CD4-positive, alpha-beta T cell (primary cell): ENCODE measurements at regions of chr19 and their contacts with region 1.

Region 1: GRCh38 chr19:19663256-19664038 is at the start of gene ATP13A1:
- DNase-seq: peak; percentile 88 to 99 (median 93)
- ATAC-seq: peak; percentile 67
- H3K4me3 ChIP-seq: peak within 1 kb of the TSS; percentile 94
- H3K4me3 Mint-ChIP-seq: peak within 1 kb of the TSS; percentile 95
- H3K27ac ChIP-seq: peak within 1 kb of the TSS; percentile 96
- H3K27ac Mint-ChIP-seq: peak within 1 kb of the TSS; percentile 99
- H3K4me1 ChIP-seq: peaks cover 70% of the 10 kb centered on the region
- H3K4me1 Mint-ChIP-seq: peaks cover 47% of the 10 kb centered on the region
- H3K27me3 ChIP-seq: no peaks in the 10 kb centered on the region
- H3K27me3 Mint-ChIP-seq: no peaks in the 10 kb centered on the region
- CTCF ChIP-seq: no peak
- total RNA-seq, gene ATP13A1: 84.8 to 87.6 TPM

Region 2: GRCh38 chr19:18281082-18282020 is 1382.1 kb before region 1 on chr19 and contains the start of gene JUND:
- CTCF ChIA-PET with region 1: no interaction called
- POLR2A ChIA-PET with region 1: interaction called, 12 read pairs
- intact Hi-C with region 1: no loop called
- DNase-seq: peak; percentile 92 to 100 (median 97)
- ATAC-seq: peak; percentile 63
- H3K4me3 ChIP-seq: peak within 1 kb of the TSS; percentile 99
- H3K4me3 Mint-ChIP-seq: peak within 1 kb of the TSS; percentile 99
- H3K27ac ChIP-seq: peak within 1 kb of the TSS; percentile 99
- H3K27ac Mint-ChIP-seq: peak within 1 kb of the TSS; percentile 100
- H3K4me1 ChIP-seq: peaks cover 65% of the 10 kb centered on the region
- H3K4me1 Mint-ChIP-seq: peaks cover 58% of the 10 kb centered on the region
- H3K27me3 ChIP-seq: no peaks in the 10 kb centered on the region
- H3K27me3 Mint-ChIP-seq: peaks cover 9% of the 10 kb centered on the region
- CTCF ChIP-seq: no peak
- total RNA-seq, gene JUND: 1,827 to 1,976 TPM

Region 3: DNA sequence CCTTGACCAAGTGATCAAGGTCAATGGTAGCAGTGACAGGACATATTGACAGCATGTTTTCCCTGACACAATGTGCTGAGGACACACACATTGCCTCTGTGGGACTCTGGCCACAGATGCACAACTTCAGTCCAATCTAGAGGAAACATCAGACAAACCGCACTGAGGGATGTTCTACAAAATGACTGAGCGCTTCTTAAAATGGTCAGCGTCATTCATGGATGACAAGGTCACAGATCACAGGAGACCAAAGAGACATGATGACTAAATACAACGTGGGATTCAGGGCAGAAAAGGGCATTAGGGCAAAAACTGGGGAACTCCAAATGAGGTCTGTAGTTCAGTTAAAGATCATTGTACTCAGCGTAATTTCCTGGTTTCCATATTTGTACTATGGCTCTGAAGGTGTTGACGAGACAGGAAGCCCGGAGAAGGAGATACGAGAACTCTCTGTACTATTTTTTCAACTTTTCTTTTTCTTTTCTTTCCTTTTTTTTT is 65.6 kb before region 1 on chr19:
- CTCF ChIA-PET with region 1: no interaction called
- POLR2A ChIA-PET with region 1: interaction called, 32 read pairs
- intact Hi-C with region 1: loop called in 1 of 2 experiments (anchors 2 kb)
- DNase-seq: peak in 10 of 14 experiments; percentile 20 to 96 (median 40)
- ATAC-seq: peak; percentile 73
- H3K4me3 ChIP-seq: no peak overlapping the region
- H3K4me3 Mint-ChIP-seq: peak overlapping the region; percentile 55
- H3K27ac ChIP-seq: peak overlapping the region; percentile 94 to 97
- H3K27ac Mint-ChIP-seq: peak overlapping the region; percentile 95
- H3K4me1 ChIP-seq: peaks cover 96% of the 10 kb centered on the region
- H3K4me1 Mint-ChIP-seq: peaks cover 62% of the 10 kb centered on the region
- H3K27me3 ChIP-seq: no peaks in the 10 kb centered on the region
- H3K27me3 Mint-ChIP-seq: no peaks in the 10 kb centered on the region
- CTCF ChIP-seq: no peak

Region 4: DNA sequence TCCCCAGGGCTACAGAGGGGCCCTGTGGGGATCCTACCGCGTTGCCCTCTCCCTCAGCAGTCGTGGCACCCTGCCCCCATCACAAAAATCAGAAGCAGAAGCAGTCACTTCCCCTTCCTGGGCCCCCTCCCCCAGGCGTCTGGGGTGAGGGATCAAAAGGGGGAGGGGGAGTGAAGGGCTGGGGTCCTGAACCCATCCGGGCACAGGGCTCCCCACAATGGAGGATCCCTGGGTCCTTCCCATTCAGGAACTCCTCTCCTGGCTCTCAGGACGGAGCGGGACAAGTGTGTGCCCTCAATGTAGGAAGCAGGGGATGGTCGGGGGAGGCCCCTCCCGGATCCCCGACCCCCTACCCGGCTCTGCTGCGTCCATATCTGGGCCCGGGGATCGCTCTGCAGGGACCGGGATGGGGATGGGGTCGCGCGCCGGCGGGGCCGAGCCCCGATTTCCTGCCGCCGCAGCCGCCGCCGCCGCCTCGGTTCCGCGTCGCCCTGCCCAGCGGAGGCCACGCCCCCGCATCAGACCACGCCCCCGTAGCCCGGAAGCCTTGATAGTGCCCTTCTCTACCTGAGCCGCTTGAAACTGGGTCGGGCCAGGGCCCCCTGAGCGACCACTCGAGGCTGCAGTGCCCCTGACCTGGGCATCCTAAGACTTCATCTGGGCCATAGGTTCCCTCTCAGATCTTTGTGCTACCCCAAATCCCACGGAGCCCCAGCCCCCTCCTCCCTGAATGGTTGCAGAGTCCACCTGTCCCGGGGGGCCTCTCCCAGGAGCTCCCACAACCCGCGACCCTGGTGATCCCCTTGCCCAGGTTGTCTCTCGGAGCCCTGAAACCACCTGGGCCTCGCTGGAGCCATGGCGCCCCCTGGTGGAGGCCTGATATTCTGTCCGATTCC is 20.0 kb before region 1 on chr19 and contains the start of gene GMIP:
- CTCF ChIA-PET with region 1: interaction called, 4 read pairs
- POLR2A ChIA-PET with region 1: interaction called, 19 read pairs
- intact Hi-C with region 1: loop called in 1 of 2 experiments (anchors 2 kb)
- DNase-seq: peak; percentile 82 to 94 (median 88)
- ATAC-seq: peak; percentile 90
- H3K4me3 ChIP-seq: peak within 1 kb of the TSS; percentile 100
- H3K4me3 Mint-ChIP-seq: peak within 1 kb of the TSS; percentile 99
- H3K27ac ChIP-seq: peak within 1 kb of the TSS; percentile 91 to 97
- H3K27ac Mint-ChIP-seq: peak within 1 kb of the TSS; percentile 95
- H3K4me1 ChIP-seq: peaks cover 33% of the 10 kb centered on the region
- H3K4me1 Mint-ChIP-seq: peaks cover 23% of the 10 kb centered on the region
- H3K27me3 ChIP-seq: no peaks in the 10 kb centered on the region
- H3K27me3 Mint-ChIP-seq: no peaks in the 10 kb centered on the region
- CTCF ChIP-seq: peak; percentile 74
- total RNA-seq, gene GMIP: 89.6 to 97.0 TPM

Region 5: GRCh38 chr19:19719798-19720197 is 56.4 kb after region 1 on chr19:
- CTCF ChIA-PET with region 1: no interaction called
- POLR2A ChIA-PET with region 1: interaction called, 11 read pairs
- intact Hi-C with region 1: no loop called
- DNase-seq: peak in 1 of 14 experiments; percentile 28
- ATAC-seq: peak; percentile 44
- H3K4me3 ChIP-seq: no peak overlapping the region
- H3K4me3 Mint-ChIP-seq: peak overlapping the region; percentile 28
- H3K27ac ChIP-seq: no peak overlapping the region
- H3K27ac Mint-ChIP-seq: no peak overlapping the region
- H3K4me1 ChIP-seq: no peaks in the 10 kb centered on the region
- H3K4me1 Mint-ChIP-seq: peaks cover 4% of the 10 kb centered on the region
- H3K27me3 ChIP-seq: no peaks in the 10 kb centered on the region
- H3K27me3 Mint-ChIP-seq: no peaks in the 10 kb centered on the region
- CTCF ChIP-seq: no peak

Region 6: GRCh38 chr19:19745496-19746285 is 82.2 kb after region 1 on chr19:
- CTCF ChIA-PET with region 1: no interaction called
- POLR2A ChIA-PET with region 1: no interaction called
- intact Hi-C with region 1: no loop called
- DNase-seq: peak in 2 of 14 experiments; percentile 20 to 32
- ATAC-seq: peak; percentile 65
- H3K4me3 ChIP-seq: no peak overlapping the region
- H3K4me3 Mint-ChIP-seq: no peak overlapping the region
- H3K27ac ChIP-seq: no peak overlapping the region
- H3K27ac Mint-ChIP-seq: no peak overlapping the region
- H3K4me1 ChIP-seq: no peaks in the 10 kb centered on the region
- H3K4me1 Mint-ChIP-seq: no peaks in the 10 kb centered on the region
- H3K27me3 ChIP-seq: no peaks in the 10 kb centered on the region
- H3K27me3 Mint-ChIP-seq: no peaks in the 10 kb centered on the region
- CTCF ChIP-seq: no peak

Region 7: DNA sequence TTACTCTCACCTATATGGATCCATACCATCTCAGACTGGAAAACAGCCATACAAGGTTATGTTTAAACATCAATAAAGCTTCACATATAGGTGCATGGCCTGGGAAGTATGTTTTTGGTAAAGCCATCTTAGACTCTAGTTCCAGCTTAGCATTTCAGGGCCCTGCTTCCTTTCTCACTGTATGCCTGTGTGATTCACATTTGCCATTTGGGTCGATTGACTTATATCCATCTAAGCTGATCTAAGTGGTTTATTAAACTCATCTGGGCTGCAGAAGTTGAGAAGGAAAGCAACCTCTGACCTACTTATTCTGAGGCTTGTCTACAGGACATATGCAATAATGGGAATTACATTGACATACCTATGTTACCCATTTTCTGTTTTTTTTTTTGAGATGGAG is 124.6 kb after region 1 on chr19:
- CTCF ChIA-PET with region 1: no interaction called
- POLR2A ChIA-PET with region 1: no interaction called
- intact Hi-C with region 1: no loop called
- DNase-seq: no peak
- ATAC-seq: no peak
- H3K4me3 ChIP-seq: no peak overlapping the region
- H3K4me3 Mint-ChIP-seq: no peak overlapping the region
- H3K27ac ChIP-seq: no peak overlapping the region
- H3K27ac Mint-ChIP-seq: peak overlapping the region; percentile 36
- H3K4me1 ChIP-seq: peaks cover 2% of the 10 kb centered on the region
- H3K4me1 Mint-ChIP-seq: peaks cover 21% of the 10 kb centered on the region
- H3K27me3 ChIP-seq: no peaks in the 10 kb centered on the region
- H3K27me3 Mint-ChIP-seq: no peaks in the 10 kb centered on the region
- CTCF ChIP-seq: no peak

Region 8: DNA sequence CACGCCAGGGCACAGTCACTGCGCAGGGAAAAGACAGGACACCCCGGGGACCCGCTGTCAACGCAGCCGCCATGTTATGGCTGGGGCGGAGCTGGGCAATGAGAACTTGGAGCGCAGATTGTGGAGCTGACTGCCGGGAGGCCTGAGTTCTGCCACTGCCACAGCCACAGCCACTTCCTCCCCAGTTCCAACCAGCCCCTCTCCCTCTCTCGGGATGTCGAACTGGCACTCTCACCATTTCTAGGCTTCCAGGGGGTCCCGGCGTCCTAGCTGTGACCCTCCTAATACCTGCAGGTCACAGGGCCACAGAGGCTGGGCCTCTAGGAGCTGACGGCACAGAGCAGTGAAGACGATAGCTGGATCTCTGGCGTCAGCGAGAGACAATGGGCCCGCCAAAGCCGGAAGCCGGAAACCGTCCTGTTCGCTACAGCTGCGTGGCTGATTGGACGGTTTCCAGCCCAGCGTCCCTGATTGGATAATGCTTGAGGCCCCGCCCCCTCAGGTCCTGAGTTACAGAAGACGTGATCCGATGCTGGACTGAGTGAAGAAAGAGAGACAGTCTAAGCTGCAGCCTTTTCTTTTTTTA is 158.0 kb after region 1 on chr19 and contains the start of gene ZNF506:
- CTCF ChIA-PET with region 1: no interaction called
- POLR2A ChIA-PET with region 1: interaction called, 96 read pairs
- intact Hi-C with region 1: loop called (anchors 1 to 5 kb)
- DNase-seq: peak; percentile 95 to 99 (median 97)
- ATAC-seq: peak; percentile 79
- H3K4me3 ChIP-seq: peak within 1 kb of the TSS; percentile 62
- H3K4me3 Mint-ChIP-seq: peak within 1 kb of the TSS; percentile 99
- H3K27ac ChIP-seq: peak within 1 kb of the TSS; percentile 97
- H3K27ac Mint-ChIP-seq: peak within 1 kb of the TSS; percentile 86
- H3K4me1 ChIP-seq: peaks cover 45% of the 10 kb centered on the region
- H3K4me1 Mint-ChIP-seq: peaks cover 44% of the 10 kb centered on the region
- H3K27me3 ChIP-seq: no peaks in the 10 kb centered on the region
- H3K27me3 Mint-ChIP-seq: no peaks in the 10 kb centered on the region
- CTCF ChIP-seq: no peak
- total RNA-seq, gene ZNF506: 48.0 to 50.7 TPM

Region 9: DNA sequence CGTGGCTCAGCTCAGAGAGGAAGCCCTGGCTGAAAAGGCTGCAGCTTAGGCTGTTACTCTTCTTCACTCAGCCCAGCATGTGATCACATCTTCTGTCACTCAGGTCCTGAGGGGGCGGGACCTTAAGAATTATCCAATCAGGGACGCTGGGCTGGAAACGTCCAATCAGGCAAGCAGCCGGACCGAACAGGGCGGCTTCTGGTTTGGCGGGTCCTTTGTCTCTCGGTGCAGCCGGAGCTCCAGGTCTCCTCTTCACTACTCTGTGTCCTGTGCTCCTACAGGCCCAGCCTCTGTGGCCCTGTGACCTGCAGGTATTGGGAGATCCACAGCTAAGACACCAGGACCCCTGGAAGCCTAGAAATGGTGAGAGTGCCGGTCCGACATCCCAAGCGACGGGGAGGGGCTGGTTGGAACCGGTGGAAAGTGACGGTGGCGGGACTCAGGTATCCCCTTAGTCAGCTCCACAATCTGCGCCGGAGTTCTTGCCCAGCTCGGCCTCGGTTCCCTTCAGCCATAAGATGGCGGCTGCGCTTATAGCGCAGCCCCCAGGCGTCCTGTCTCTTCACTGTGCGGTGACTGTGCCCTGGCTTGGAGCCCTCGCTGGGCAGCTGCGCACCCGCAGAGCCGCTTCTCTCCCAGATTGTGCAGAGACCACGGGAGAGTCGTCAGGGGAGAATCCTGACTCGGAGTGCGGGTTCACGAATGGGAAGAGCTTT is 237.4 kb after region 1 on chr19 and contains the start of gene ZNF93:
- CTCF ChIA-PET with region 1: no interaction called
- POLR2A ChIA-PET with region 1: interaction called, 44 read pairs
- intact Hi-C with region 1: no loop called
- DNase-seq: peak; percentile 80 to 96 (median 85)
- ATAC-seq: peak; percentile 97
- H3K4me3 ChIP-seq: peak within 1 kb of the TSS; percentile 96
- H3K4me3 Mint-ChIP-seq: peak within 1 kb of the TSS; percentile 94
- H3K27ac ChIP-seq: peak within 1 kb of the TSS; percentile 70
- H3K27ac Mint-ChIP-seq: peak within 1 kb of the TSS; percentile 82
- H3K4me1 ChIP-seq: peaks cover 20% of the 10 kb centered on the region
- H3K4me1 Mint-ChIP-seq: peaks cover 47% of the 10 kb centered on the region
- H3K27me3 ChIP-seq: no peaks in the 10 kb centered on the region
- H3K27me3 Mint-ChIP-seq: no peaks in the 10 kb centered on the region
- CTCF ChIP-seq: no peak
- total RNA-seq, gene ZNF93: 4.4 to 5.4 TPM